ENCODE measurements at regions of chr5 and their contacts with region 1.

Region 1: GRCh38 chr5:106843812-106844416 is 826.8 kb downstream of the EFNA5 start:
- DNase-seq: no peak
- H3K4me3 ChIP-seq: no peak overlapping the region
- H3K27ac ChIP-seq: no peak overlapping the region
- H3K4me1 ChIP-seq: no peaks in the 10 kb centered on the region
- H3K27me3 ChIP-seq: no peaks in the 10 kb centered on the region
- CTCF ChIP-seq: peak in 1 of 3 experiments; percentile 47; a peak in 1 of 4 replicates
- EP300 ChIP-seq: no peak
- POLR2A ChIP-seq: no peak
- RAD21 ChIP-seq: peak; percentile 37 to 44

Region 2: DNA sequence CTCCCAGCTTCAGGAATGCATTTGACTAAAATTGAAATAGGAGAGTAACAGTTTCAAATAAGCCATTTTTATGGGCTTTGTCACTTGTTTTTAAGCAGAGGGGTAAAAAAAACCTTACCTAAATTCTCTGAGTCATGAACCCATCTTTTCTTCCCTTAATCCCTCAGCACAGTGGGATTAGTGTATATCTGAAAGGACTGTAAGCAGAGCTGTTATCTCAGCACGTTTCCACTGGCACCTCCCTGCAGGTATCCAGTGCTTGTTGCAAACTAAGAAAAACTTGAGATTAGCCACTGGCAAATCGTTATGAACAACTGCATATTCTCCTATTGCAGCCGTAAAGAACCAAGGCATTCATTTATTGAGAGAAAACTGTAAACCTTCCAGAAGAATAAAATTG is 45.9 kb before region 1 on chr5:
- CTCF ChIA-PET with region 1: no interaction called
- POLR2A ChIA-PET with region 1: no interaction called
- DNase-seq: no peak
- H3K4me3 ChIP-seq: no peak overlapping the region
- H3K27ac ChIP-seq: no peak overlapping the region
- H3K4me1 ChIP-seq: peaks cover 0 to 2% (median 0%) of the 10 kb centered on the region in 4 experiments; a peak in 1 of 7 replicates
- H3K27me3 ChIP-seq: no peaks in the 10 kb centered on the region
- CTCF ChIP-seq: no peak
- EP300 ChIP-seq: no peak
- POLR2A ChIP-seq: no peak
- RAD21 ChIP-seq: no peak

Region 3: DNA sequence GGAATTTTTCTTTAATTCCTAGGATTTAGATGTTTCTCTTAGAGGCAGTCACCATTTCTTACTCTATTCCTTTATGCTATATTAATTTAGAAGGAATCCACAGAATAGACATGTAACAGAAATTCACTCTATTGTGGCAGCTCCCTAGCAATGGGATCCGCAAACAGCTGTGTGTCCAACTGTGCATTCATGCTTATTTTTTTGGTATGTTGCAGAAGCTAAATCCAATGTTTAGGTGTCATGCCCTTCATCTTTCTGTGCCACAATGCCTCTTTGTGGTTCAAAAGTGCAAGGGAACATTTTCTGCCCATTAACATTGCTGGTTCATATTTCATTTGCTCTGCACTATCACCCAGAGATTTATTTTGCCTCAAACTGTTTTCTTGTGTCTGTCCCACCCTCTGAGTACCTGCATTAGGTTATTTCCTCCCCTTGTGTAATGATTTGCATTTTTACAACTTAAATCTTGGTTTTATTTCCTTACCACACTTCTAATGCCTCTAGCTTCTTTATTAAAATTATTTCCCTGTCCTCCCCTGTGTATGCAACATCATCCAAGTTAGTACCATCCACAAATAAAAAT is 10.3 kb after region 1 on chr5:
- CTCF ChIA-PET with region 1: interaction called, 10 read pairs
- POLR2A ChIA-PET with region 1: no interaction called
- DNase-seq: no peak
- H3K4me3 ChIP-seq: no peak overlapping the region
- H3K27ac ChIP-seq: no peak overlapping the region
- H3K4me1 ChIP-seq: peaks cover 0 to 5% (median 1%) of the 10 kb centered on the region in 4 experiments; a peak in 2 of 7 replicates
- H3K27me3 ChIP-seq: no peaks in the 10 kb centered on the region
- CTCF ChIP-seq: no peak
- EP300 ChIP-seq: no peak
- POLR2A ChIP-seq: no peak
- RAD21 ChIP-seq: no peak

Measured in H1 (cell line).